ENCODE measurements at regions of chrX and their contacts with region 1.

Region 1: DNA sequence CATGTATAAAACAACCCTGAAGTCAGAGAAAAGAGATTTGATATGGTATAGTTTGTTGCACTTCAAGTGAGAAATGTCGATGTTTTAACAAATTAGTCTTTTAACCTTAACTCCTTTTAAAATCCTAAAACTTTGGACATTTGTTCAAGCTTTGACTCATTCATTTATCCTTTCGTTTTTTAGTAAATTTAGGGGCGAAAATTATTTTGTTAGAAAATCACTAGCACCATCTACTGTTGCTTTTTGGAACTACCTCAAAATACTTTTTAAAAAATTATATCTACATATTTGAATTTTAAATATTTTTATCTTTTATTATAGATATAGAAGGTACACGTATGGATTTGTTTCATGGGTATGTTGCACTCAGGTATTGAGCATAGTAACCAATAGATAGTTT is 165.1 kb upstream of the POF1B start:
- DNase-seq: no peak
- H3K4me3 Mint-ChIP-seq: no peak overlapping the region
- H3K27ac Mint-ChIP-seq: no peak overlapping the region
- H3K4me1 Mint-ChIP-seq: no peaks in the 10 kb centered on the region
- H3K27me3 Mint-ChIP-seq: no peaks in the 10 kb centered on the region

Region 2: GRCh38 chrX:84729809-84730208 is 814.8 kb before region 1 on chrX:
- intact Hi-C with region 1: loop called (anchors 2 kb)
- DNase-seq: no peak
- H3K4me3 Mint-ChIP-seq: no peak overlapping the region
- H3K27ac Mint-ChIP-seq: no peak overlapping the region
- H3K4me1 Mint-ChIP-seq: no peaks in the 10 kb centered on the region
- H3K27me3 Mint-ChIP-seq: peaks cover 2% of the 10 kb centered on the region

Region 3: DNA sequence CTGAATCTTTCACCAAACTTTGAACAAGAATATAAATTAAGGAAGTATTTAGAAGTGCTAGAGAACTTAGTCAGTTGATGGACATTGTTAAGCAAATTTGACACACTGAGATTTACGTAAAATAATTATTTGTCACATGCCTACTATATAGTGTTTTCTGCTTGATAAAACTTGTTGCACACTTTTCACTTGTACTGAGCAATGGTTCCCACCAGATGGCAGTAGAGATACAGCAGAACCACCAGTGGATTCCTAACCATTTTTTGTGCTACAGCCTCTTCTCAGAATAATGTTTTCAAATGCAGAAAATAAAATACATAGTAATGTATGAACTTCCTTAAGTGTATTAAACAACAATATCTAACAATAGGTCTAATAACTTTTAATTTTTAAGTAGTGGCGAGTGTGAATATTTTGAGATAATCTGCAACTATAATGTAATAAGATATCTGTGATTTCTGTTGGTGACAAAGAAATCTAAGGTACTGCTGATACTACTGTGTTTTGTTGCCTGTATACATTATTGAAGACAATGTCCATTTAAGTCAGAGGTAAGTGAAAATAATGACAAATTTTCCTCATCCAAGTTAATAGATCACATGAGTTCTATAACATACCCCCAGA is 459.7 kb before region 1 on chrX:
- intact Hi-C with region 1: loop called (anchors 10 kb)
- DNase-seq: no peak
- H3K4me3 Mint-ChIP-seq: no peak overlapping the region
- H3K27ac Mint-ChIP-seq: no peak overlapping the region
- H3K4me1 Mint-ChIP-seq: no peaks in the 10 kb centered on the region
- H3K27me3 Mint-ChIP-seq: no peaks in the 10 kb centered on the region

Region 4: GRCh38 chrX:85111347-85111746 is 433.3 kb before region 1 on chrX:
- intact Hi-C with region 1: loop called (anchors 2 kb)
- DNase-seq: no peak
- H3K4me3 Mint-ChIP-seq: no peak overlapping the region
- H3K27ac Mint-ChIP-seq: no peak overlapping the region
- H3K4me1 Mint-ChIP-seq: no peaks in the 10 kb centered on the region
- H3K27me3 Mint-ChIP-seq: no peaks in the 10 kb centered on the region

Measured in activated T-helper 1 cell treated with anti-CD3 and anti-CD28 coated beads, Interleukin-12 subunit alpha, Interleukin-12 subunit beta, Interleukin-2, Interleukin-4 antibody, amounts not matched to agents 30 ng/mL and 10 ng/mL and 1 ng/mL, durations not matched to agents 14 hours and 24 hours and 36 hours (primary cell).